ENCODE measurements at regions of chr15 and their contacts with region 1.

Region 1: GRCh38 chr15:92989470-92989869 is 89.3 kb downstream of the CHD2 start:
- DNase-seq: no peak
- H3K4me3 ChIP-seq: no peak overlapping the region
- H3K27ac ChIP-seq: no peak overlapping the region
- H3K4me1 ChIP-seq: peaks cover 12% of the 10 kb centered on the region
- H3K27me3 ChIP-seq: no peaks in the 10 kb centered on the region
- CTCF ChIP-seq: no peak

Region 2: GRCh38 chr15:92930776-92931175 is 58.7 kb before region 1 on chr15:
- intact Hi-C with region 1: loop called (anchors 10 kb)
- DNase-seq: no peak
- H3K4me3 ChIP-seq: no peak overlapping the region
- H3K27ac ChIP-seq: peak overlapping the region; percentile 0
- H3K4me1 ChIP-seq: peaks cover 34% of the 10 kb centered on the region
- H3K27me3 ChIP-seq: no peaks in the 10 kb centered on the region
- CTCF ChIP-seq: no peak

Measured in left ventricle myocardium inferior (tissue), 1 donor.